ENCODE measurements at regions of chr15 and their contacts with region 1.

Region 1: DNA sequence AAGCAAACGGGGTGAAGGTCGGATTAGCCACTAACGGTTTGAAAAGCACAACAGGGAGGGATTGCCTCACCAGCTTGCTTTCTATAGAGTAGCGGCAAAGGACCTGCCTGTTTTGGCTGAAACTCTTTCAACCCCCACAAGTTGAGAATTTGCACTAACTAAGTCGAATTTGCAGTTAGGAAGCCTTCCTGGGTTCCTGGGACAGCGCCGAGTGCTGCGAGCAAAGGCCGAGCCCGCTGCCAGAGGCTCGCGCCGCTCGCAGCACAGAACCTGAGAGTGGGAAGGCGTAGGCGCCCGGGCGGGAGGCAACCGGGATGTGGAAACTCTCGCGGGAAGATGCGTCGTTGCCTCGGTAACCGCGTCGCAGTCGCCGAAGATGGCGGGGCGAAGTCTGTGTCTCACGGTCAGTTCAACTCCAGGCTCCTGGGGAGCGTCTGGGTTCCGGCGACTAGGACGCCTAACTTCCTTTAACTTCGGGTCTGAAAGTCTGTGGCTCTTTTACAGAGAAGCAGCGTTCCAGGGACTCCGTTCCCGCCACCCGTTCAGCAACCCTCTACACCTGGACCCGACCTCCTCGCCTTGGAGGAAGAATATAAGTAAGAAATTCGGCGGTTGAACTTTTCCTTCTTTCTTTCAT is at the start of gene TEX9:
- DNase-seq: peak; percentile 68
- H3K4me3 Mint-ChIP-seq: peak within 1 kb of the TSS; percentile 84
- H3K27ac Mint-ChIP-seq: no peak within 1 kb of the TSS
- H3K4me1 Mint-ChIP-seq: peaks cover 18% of the 10 kb centered on the region
- H3K27me3 Mint-ChIP-seq: peaks cover 37% of the 10 kb centered on the region
- total RNA-seq, gene TEX9: 0.67 and 0.78 TPM in 2 replicates

Region 2: GRCh38 chr15:55993111-55993803 is 371.9 kb before region 1 on chr15 and contains the start of gene NEDD4:
- intact Hi-C with region 1: loop called (anchors 10 kb)
- DNase-seq: peak; percentile 68
- H3K4me3 Mint-ChIP-seq: peak within 1 kb of the TSS; percentile 87
- H3K27ac Mint-ChIP-seq: peak within 1 kb of the TSS; percentile 57
- H3K4me1 Mint-ChIP-seq: peaks cover 23% of the 10 kb centered on the region
- H3K27me3 Mint-ChIP-seq: peaks cover 30% of the 10 kb centered on the region
- total RNA-seq, gene NEDD4: 10.4 and 12.6 TPM in 2 replicates

Region 3: GRCh38 chr15:56464893-56465520 is 99.8 kb after region 1 on chr15 and contains the start of gene MNS1:
- intact Hi-C with region 1: loop called (anchors 1 kb)
- DNase-seq: peak; percentile 70
- H3K4me3 Mint-ChIP-seq: peak within 1 kb of the TSS; percentile 93
- H3K27ac Mint-ChIP-seq: peak within 1 kb of the TSS; percentile 74
- H3K4me1 Mint-ChIP-seq: peaks cover 28% of the 10 kb centered on the region
- H3K27me3 Mint-ChIP-seq: peaks cover 32% of the 10 kb centered on the region
- total RNA-seq, gene MNS1: 0.17 and 0.44 TPM in 2 replicates